Dorsolateral prefrontal cortex (tissue), 120 donors: ENCODE measurements at regions of chr16 and their contacts with region 1.

Region 1: DNA sequence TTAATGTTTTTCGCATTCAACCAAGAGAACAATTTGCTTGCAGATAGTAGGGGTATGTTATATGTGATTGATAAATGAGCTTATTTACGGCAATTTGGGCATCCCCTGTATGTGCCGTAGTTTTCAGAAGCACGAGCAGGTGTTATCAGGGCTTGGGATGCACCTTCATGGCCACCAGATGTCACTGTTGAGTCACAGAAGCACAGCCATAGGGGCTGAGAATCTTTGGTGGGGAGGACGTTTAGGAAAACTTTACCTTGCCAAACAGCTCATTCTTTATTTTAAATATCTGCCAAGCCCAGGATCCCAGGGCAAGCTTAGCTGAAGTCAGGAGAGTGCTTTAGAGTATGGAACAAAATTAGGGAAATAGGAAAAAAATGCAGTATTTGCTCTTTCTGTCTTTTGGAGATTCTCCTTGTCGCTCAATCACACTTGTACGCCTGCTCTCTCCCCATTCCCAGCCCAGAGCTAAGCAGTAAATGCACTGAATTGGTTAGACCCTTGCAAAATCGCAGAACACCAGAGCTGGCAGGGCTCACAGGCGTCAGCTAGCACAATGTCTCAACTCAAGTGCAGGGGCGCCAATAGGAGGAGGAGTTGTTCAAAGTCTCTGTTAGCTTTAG is 93.6 kb upstream of the MPHOSPH6 start:
- DNase-seq: peak; percentile 45 to 81 (median 66)
- H3K4me3 ChIP-seq: peak overlapping the region in 8 of 59 donors; percentile 1 to 20 (median 11)
- H3K27ac ChIP-seq: peak overlapping the region in 4 of 59 donors; percentile 9 to 34 (median 20)
- H3K27me3 ChIP-seq: peaks cover 0 to 3% (median 0%) of the 10 kb centered on the region in 45 donors
- CTCF ChIP-seq: peak; percentile 81 to 100 (median 97)

Region 2: GRCh38 chr16:82119405-82119804 is 144.2 kb before region 1 on chr16:
- intact Hi-C with region 1: no loop called
- DNase-seq: no peak
- H3K4me3 ChIP-seq: no peak overlapping the region
- H3K27ac ChIP-seq: no peak overlapping the region
- H3K27me3 ChIP-seq: no peaks in the 10 kb centered on the region
- CTCF ChIP-seq: no peak

Region 3: DNA sequence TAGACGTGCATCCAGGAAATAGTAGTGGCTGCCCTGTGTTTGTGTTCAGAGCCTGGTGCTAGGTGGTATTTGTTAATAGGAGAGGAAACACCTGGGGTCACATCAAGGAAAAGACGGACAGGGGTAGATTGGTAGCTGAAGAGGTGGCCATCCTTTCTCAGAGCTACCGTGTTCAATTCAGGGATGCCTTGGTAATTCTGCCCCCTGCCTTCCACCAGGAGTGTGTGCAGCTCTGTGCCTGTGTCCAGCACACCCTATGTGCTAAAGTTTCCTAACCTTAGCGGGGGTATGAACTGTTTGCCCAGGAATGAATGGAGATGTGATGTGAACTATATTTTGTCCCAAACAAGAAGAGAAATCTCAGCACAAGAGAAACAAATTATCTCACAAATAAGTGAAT is 80.5 kb after region 1 on chr16:
- intact Hi-C with region 1: loop called (anchors 1 kb)
- DNase-seq: peak in 3 of 10 donors; percentile 49 to 59 (median 52)
- H3K4me3 ChIP-seq: no peak overlapping the region
- H3K27ac ChIP-seq: no peak overlapping the region
- H3K27me3 ChIP-seq: peaks cover 0 to 6% (median 0%) of the 10 kb centered on the region in 45 donors
- CTCF ChIP-seq: peak in 55 of 56 donors; percentile 21 to 88 (median 73)

Region 4: DNA sequence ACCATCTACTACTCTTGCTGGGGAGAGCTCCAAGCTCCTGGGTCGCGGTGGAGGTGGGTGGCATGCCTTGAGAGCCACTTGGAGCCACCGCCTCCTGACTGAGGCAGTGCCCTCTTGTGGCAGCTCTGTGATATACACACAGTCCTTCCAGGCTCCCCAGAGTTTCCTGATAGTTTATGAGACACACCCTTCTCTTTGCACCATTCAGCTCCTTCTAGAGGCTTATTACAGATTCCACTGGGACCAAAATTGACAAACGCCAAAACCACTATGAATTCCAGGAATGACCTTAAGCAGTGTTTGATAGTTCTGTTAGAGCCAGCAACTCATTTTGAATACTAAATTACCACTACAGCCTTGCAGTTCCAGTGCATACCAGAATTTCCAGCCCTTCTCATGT is 193.1 kb after region 1 on chr16:
- intact Hi-C with region 1: loop called (anchors 5 to 10 kb)
- DNase-seq: peak in 7 of 10 donors; percentile 24 to 62 (median 51)
- H3K4me3 ChIP-seq: no peak overlapping the region
- H3K27ac ChIP-seq: no peak overlapping the region
- H3K27me3 ChIP-seq: peaks cover 0 to 4% (median 0%) of the 10 kb centered on the region in 45 donors
- CTCF ChIP-seq: peak; percentile 40 to 87 (median 73)

Region 5: DNA sequence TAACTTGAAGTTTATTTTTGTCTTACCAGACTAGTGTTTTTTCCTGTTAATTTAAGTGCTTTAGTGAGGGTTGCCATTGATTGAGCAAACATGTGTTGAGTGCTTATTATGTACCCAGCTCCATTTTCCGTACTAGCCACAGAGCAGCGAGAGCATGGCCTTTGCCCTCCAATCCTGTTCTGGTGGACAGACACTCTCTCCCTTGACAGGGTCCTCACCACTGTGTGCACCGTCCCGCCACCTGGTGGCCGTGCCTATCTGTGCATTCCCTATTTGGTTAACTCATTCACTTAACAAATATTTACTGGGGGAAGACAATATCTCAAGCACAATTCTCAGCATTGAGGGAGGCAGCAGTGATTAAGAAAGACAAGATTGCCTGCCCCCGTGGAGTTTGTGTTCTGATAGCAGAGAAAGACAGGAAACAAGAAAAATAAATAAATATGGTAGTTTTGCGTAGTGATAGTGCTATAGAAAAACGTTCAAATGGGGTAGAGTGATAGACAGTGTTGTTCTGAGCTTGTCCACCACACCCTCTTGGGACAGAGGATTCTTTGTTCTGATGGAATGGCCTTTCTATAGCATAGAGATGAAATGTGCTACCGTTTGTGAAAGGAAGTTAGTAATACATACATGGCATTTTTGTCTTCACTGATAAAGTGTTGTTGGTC is 376.2 kb after region 1 on chr16:
- intact Hi-C with region 1: no loop called
- DNase-seq: peak; percentile 11 to 66 (median 63)
- H3K4me3 ChIP-seq: no peak overlapping the region
- H3K27ac ChIP-seq: no peak overlapping the region
- H3K27me3 ChIP-seq: peaks cover 0 to 3% (median 0%) of the 10 kb centered on the region in 45 donors
- CTCF ChIP-seq: peak; percentile 28 to 85 (median 70)